Heart left ventricle (tissue), 16 donors: ENCODE measurements at regions of chr12 and their contacts with region 1.

Region 1: GRCh38 chr12:29073628-29074239 is 75.3 kb upstream of the FAR2 start:
- DNase-seq: no peak
- ATAC-seq: peak; percentile 55 to 81 (median 69)
- H3K4me3 ChIP-seq: no peak overlapping the region
- H3K27ac ChIP-seq: no peak overlapping the region
- H3K4me1 ChIP-seq: no peaks in the 10 kb centered on the region
- H3K27me3 ChIP-seq: no peaks in the 10 kb centered on the region
- CTCF ChIP-seq: peak; percentile 65 to 84 (median 74)
- POLR2A ChIP-seq: no peak

Region 2: GRCh38 chr12:29148911-29149690 is 75.4 kb after region 1 on chr12 and contains the start of gene FAR2:
- intact Hi-C with region 1: no loop called
- DNase-seq: peak; percentile 51 to 77 (median 65)
- ATAC-seq: peak; percentile 52 to 82 (median 80)
- H3K4me3 ChIP-seq: peak within 1 kb of the TSS; percentile 53 to 91 (median 79)
- H3K27ac ChIP-seq: peak within 1 kb of the TSS; percentile 33 to 91 (median 79)
- H3K4me1 ChIP-seq: peaks cover 0 to 54% (median 21%) of the 10 kb centered on the region in 12 donors
- H3K27me3 ChIP-seq: no peaks in the 10 kb centered on the region
- CTCF ChIP-seq: no peak
- POLR2A ChIP-seq: no peak
- total RNA-seq, gene FAR2: 1.1 to 11.6 (median 3.1) TPM

Region 3: DNA sequence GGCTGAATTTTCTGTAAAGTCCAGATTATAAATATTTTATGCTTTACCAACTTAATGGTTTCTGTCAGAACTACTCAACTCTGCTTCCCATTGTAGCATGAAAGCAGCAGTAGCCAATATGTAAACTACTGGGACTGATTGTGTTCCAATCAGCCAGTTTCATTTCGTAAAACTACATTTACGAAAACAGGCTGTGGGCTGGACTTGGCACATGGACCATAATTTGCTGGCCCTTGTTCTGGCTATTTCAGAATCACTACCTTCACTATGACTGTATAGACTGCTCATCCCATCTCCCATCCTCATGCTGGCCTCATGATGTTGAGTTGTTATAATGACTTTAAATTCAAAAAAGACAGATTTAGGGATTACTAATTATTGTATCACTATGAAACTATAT is 114.0 kb after region 1 on chr12:
- intact Hi-C with region 1: loop called in 1 of 10 experiments (anchors 10 kb)
- DNase-seq: no peak
- ATAC-seq: peak in 1 of 4 donors; percentile 31
- H3K4me3 ChIP-seq: no peak overlapping the region
- H3K27ac ChIP-seq: no peak overlapping the region
- H3K4me1 ChIP-seq: peaks cover 0 to 7% (median 0%) of the 10 kb centered on the region in 12 donors
- H3K27me3 ChIP-seq: no peaks in the 10 kb centered on the region
- CTCF ChIP-seq: no peak
- POLR2A ChIP-seq: no peak

Region 4: GRCh38 chr12:29226616-29227015 is 152.9 kb after region 1 on chr12:
- intact Hi-C with region 1: loop called in 1 of 10 experiments (anchors 10 kb)
- DNase-seq: no peak
- ATAC-seq: no peak
- H3K4me3 ChIP-seq: no peak overlapping the region
- H3K27ac ChIP-seq: no peak overlapping the region
- H3K4me1 ChIP-seq: no peaks in the 10 kb centered on the region
- H3K27me3 ChIP-seq: no peaks in the 10 kb centered on the region
- CTCF ChIP-seq: no peak
- POLR2A ChIP-seq: no peak